Transverse colon (tissue), 4 donors: ENCODE measurements at regions of chr11 and their contacts with region 1.

Region 1: DNA sequence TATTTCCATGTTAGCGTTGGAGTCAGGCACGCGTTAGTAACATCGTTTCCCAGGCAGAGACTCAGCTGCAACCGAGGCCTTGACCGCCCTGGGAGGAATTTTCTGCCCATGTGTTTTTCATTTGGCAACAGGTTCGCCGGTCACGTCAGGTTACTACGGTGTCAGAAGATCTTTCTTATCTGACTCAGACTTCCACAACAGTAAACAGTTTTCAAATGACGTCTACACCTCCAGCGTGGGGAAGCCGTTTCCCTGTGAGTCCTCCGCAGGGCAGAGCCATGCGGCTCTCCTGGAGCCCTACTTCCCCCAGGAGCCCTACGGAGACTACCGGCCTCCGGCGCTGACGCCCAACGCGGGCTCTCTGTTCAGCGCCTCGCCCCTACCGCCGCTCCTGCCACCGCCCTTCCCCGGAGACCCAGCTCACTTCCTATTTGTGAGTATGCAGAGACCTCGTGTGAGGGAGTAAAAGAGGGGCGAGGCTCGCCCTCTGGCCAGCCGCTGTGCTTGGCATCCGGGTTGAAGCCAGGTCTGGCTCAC is 14.3 kb upstream of the POU2AF3 start:
- DNase-seq: peak; percentile 84
- H3K4me3 ChIP-seq: peak overlapping the region in 1 of 4 donors; percentile 3
- H3K27ac ChIP-seq: peak overlapping the region; percentile 64 to 75 (median 65)
- H3K4me1 ChIP-seq: peaks cover 13 to 59% (median 38%) of the 10 kb centered on the region in 4 donors
- H3K27me3 ChIP-seq: no peaks in the 10 kb centered on the region
- CTCF ChIP-seq: no peak
- EP300 ChIP-seq: no peak
- POLR2A ChIP-seq: peak; percentile 46

Region 2: DNA sequence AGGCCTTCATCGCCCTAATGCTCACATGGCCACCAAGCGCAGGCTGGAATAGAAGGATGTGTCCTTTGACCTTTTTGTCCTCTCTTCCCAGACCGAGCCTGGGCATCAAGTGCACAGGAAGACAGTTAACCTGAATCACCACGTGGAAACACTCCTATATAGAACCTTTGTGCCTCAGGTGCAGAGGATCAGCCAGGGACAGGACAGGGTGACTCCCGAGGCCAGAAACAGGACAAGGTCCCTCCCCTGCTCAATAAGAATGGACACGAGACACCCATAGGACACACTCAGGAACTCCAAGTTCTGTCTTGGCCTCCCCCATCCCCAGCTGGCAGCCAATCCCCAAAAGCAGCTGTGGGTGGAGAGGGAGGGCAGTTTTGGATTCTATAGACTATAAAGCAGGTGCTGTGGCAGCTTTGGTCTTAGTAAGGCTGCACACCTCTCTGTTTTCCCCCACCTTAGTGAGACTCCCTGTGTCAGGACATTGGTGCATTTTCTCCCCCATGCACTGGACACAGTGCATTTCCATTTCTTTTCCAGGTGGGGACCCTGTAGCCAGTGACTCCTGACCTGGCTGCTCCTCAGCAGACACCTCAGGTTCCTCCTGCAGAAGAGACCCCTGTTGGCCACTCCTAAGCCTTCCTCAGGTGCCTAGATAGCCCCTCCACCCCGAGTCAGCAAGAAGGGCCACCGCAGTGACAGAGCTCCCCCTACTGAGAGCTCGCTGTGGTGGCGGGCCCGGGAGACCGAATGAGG is 138.7 kb after region 1 on chr11:
- in situ Hi-C with region 1: loop called in 3 of 4 experiments (anchors 5 to 10 kb)
- intact Hi-C with region 1: loop called (anchors 1 kb)
- DNase-seq: peak; percentile 77
- H3K4me3 ChIP-seq: no peak overlapping the region
- H3K27ac ChIP-seq: peak overlapping the region in 1 of 4 donors; percentile 3
- H3K4me1 ChIP-seq: peaks cover 0 to 37% (median 9%) of the 10 kb centered on the region in 4 donors
- H3K27me3 ChIP-seq: no peaks in the 10 kb centered on the region
- CTCF ChIP-seq: peak; percentile 62 to 75 (median 71)
- EP300 ChIP-seq: no peak
- POLR2A ChIP-seq: no peak

Region 3: DNA sequence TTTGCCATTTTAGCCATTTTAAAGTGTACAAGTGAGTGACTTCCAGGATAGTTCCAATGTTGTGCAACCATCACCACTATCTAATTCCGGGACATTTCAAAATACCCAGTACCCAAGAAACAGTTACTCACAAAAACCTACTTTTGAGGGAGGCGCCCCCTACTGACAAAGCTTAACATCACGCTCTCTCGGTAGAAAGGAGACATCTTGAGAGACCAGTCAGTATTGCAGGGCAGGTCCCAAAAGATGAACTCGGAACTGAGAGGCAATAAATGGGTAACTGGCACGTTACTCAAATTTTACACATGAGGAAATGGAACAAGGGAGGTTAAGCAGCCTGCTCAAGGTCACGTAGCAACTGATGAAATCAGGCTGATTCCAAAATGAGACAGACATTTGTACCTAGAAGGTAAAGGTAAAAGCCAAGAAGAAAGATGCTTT is 145.1 kb after region 1 on chr11:
- in situ Hi-C with region 1: loop called in 3 of 4 experiments (anchors 5 to 10 kb)
- intact Hi-C with region 1: no loop called
- DNase-seq: peak; percentile 77
- H3K4me3 ChIP-seq: no peak overlapping the region
- H3K27ac ChIP-seq: no peak overlapping the region
- H3K4me1 ChIP-seq: peaks cover 0 to 16% (median 3%) of the 10 kb centered on the region in 4 donors
- H3K27me3 ChIP-seq: no peaks in the 10 kb centered on the region
- CTCF ChIP-seq: peak; percentile 64 to 81 (median 67)
- EP300 ChIP-seq: no peak
- POLR2A ChIP-seq: no peak

Region 4: GRCh38 chr11:111446404-111447111 is 162.5 kb after region 1 on chr11:
- in situ Hi-C with region 1: loop called in 1 of 4 experiments (anchors 5 kb)
- intact Hi-C with region 1: loop called (anchors 2 kb)
- DNase-seq: peak; percentile 83
- H3K4me3 ChIP-seq: no peak overlapping the region
- H3K27ac ChIP-seq: peak overlapping the region in 1 of 4 donors; percentile 44
- H3K4me1 ChIP-seq: peaks cover 0 to 9% (median 4%) of the 10 kb centered on the region in 4 donors
- H3K27me3 ChIP-seq: no peaks in the 10 kb centered on the region
- CTCF ChIP-seq: peak; percentile 71 to 97 (median 75)
- EP300 ChIP-seq: no peak
- POLR2A ChIP-seq: no peak

Region 5: DNA sequence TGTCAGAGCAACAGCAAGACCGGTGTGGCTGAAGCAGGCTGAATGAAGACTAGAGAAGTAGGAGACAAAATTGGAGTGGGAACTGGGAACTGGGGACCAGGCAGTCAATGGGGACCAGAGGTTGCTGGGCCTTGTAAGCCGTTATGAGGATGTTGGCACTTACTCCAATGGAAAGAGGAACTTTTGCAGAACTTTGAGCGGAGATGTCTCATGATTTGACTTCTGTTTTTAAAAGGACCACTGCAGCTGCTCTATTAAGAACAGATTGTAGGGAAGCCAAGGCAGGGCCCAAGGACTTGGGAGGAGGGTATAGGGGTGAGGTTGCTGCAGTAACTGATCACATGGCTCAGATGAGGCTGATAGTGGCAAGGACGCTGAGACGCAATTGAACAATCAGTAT is 845.6 kb after region 1 on chr11:
- in situ Hi-C with region 1: no loop called
- intact Hi-C with region 1: loop called (anchors 5 kb)
- DNase-seq: no peak
- H3K4me3 ChIP-seq: no peak overlapping the region
- H3K27ac ChIP-seq: peak overlapping the region; percentile 74 to 83 (median 76)
- H3K4me1 ChIP-seq: peaks cover 23 to 62% (median 39%) of the 10 kb centered on the region in 4 donors
- H3K27me3 ChIP-seq: no peaks in the 10 kb centered on the region
- CTCF ChIP-seq: no peak
- EP300 ChIP-seq: no peak
- POLR2A ChIP-seq: no peak